Activated CD8-positive, alpha-beta T cell treated with anti-CD3 and anti-CD28 coated beads for 36 hours (primary cell): ENCODE measurements at regions of chr4 and their contacts with region 1.

Region 1: DNA sequence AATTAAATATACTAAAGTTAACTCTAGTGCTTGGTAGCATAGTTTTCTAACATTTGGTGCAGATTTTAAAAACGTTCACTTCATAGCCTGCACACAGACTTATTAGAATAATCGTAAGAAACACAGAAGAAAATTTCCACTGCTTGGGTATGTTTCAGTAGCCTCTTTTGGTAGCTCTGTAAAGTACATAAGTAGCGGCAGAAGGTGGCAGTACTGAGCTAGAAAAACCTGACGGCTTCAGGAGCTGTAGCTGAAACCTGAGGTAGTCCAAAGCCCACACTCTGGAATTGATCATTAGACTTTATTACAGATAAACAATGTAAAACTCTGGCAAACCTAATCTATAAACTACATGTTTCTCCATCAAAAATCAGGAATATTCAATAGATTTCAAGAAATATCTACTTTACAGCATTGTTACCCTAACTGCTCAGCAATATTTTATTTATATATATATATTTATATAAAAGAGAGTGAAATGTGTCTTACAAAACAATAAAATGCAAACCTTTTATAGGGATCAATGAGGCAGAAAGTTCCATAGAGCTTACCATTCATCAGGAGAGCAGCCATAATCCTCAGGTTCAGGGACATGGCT is 88.2 kb downstream of the ATP8A1 start:
- DNase-seq: peak; percentile 79
- ATAC-seq: peak; percentile 92
- H3K4me3 Mint-ChIP-seq: no peak overlapping the region
- H3K27ac Mint-ChIP-seq: no peak overlapping the region
- H3K4me1 Mint-ChIP-seq: no peaks in the 10 kb centered on the region
- H3K27me3 Mint-ChIP-seq: no peaks in the 10 kb centered on the region
- CTCF ChIP-seq: peak; percentile 84

Region 2: GRCh38 chr4:42558156-42558555 is 10.6 kb before region 1 on chr4:
- CTCF ChIA-PET with region 1: interaction called, 10 read pairs
- POLR2A ChIA-PET with region 1: interaction called, 5 read pairs
- intact Hi-C with region 1: no loop called
- DNase-seq: no peak
- ATAC-seq: no peak
- H3K4me3 Mint-ChIP-seq: no peak overlapping the region
- H3K27ac Mint-ChIP-seq: no peak overlapping the region
- H3K4me1 Mint-ChIP-seq: no peaks in the 10 kb centered on the region
- H3K27me3 Mint-ChIP-seq: no peaks in the 10 kb centered on the region
- CTCF ChIP-seq: no peak

Region 3: DNA sequence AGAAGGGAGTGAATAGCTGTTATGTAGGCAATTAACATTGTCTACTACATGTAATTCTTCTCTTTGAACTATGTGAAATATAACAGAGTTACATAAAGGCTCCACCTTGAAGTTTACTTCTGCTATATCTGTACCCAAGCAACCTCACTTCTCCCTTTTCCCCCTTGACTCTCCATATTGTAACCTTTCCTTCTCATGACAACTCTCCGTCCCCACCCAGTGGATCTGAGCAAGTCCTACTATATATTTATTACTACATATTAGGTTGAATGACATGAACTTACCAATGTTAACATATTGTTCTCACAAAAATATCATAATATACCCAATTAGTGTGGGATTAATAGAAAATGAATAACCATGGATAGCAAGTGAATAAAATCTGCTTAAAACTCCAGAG is 181.4 kb after region 1 on chr4:
- CTCF ChIA-PET with region 1: interaction called, 13 read pairs
- POLR2A ChIA-PET with region 1: no interaction called
- intact Hi-C with region 1: loop called (anchors 5 kb)
- DNase-seq: peak; percentile 46
- ATAC-seq: peak; percentile 68
- H3K4me3 Mint-ChIP-seq: no peak overlapping the region
- H3K27ac Mint-ChIP-seq: no peak overlapping the region
- H3K4me1 Mint-ChIP-seq: peaks cover 7% of the 10 kb centered on the region
- H3K27me3 Mint-ChIP-seq: no peaks in the 10 kb centered on the region
- CTCF ChIP-seq: peak; percentile 41

Region 4: GRCh38 chr4:42768125-42768748 is 199.5 kb after region 1 on chr4:
- CTCF ChIA-PET with region 1: interaction called, 12 read pairs
- POLR2A ChIA-PET with region 1: no interaction called
- intact Hi-C with region 1: no loop called
- DNase-seq: peak; percentile 28
- ATAC-seq: no peak
- H3K4me3 Mint-ChIP-seq: no peak overlapping the region
- H3K27ac Mint-ChIP-seq: no peak overlapping the region
- H3K4me1 Mint-ChIP-seq: no peaks in the 10 kb centered on the region
- H3K27me3 Mint-ChIP-seq: peaks cover 7% of the 10 kb centered on the region
- CTCF ChIP-seq: peak; percentile 21

Region 5: DNA sequence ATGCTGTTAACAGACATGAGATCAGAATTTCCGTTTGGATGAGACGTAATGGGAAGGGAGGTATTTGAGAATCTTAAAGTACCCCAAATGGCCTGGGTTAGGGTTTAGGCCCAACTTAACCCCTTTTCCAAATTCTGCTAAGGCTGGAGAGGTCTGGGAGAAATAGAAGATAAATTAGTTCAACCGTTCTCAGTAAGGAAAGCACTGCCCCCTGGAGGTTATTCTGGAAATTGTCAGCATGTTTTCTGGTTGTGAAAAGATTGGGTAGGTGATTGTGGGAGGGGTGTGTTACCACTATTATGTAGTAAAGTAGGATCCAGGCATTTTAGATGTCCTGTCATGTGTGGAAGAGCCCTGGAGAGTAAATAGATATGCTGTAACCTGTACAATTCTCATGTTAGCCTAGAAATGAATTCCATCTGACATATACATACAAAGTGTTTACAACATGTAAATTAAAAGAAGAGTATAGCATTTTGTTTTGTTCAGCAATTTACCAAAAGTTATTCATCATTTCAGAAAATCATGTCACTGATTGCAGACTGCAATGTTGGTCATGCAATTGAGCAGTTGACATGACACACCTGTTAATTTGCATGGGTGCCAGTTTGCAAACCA is 297.0 kb after region 1 on chr4:
- CTCF ChIA-PET with region 1: interaction called, 15 read pairs
- POLR2A ChIA-PET with region 1: no interaction called
- intact Hi-C with region 1: loop called (anchors 2 kb)
- DNase-seq: peak; percentile 69
- ATAC-seq: peak; percentile 62
- H3K4me3 Mint-ChIP-seq: no peak overlapping the region
- H3K27ac Mint-ChIP-seq: no peak overlapping the region
- H3K4me1 Mint-ChIP-seq: no peaks in the 10 kb centered on the region
- H3K27me3 Mint-ChIP-seq: peaks cover 24% of the 10 kb centered on the region
- CTCF ChIP-seq: peak; percentile 92